Activated B cell treated with CpG ODN at 0.5 μM for 24 hours (primary cell): ENCODE measurements at regions of chr5 and their contacts with region 1.

Region 1: GRCh38 chr5:176361437-176362232 is at the start of gene KIAA1191:
- DNase-seq: peak; percentile 86
- ATAC-seq: peak; percentile 87
- H3K4me3 Mint-ChIP-seq: peak within 1 kb of the TSS; percentile 99
- H3K27ac Mint-ChIP-seq: peak within 1 kb of the TSS; percentile 98
- H3K4me1 Mint-ChIP-seq: peaks cover 28% of the 10 kb centered on the region
- H3K27me3 Mint-ChIP-seq: no peaks in the 10 kb centered on the region
- CTCF ChIP-seq: no peak
- total RNA-seq, gene KIAA1191: 56.6 and 57.5 TPM in 2 replicates

Region 2: DNA sequence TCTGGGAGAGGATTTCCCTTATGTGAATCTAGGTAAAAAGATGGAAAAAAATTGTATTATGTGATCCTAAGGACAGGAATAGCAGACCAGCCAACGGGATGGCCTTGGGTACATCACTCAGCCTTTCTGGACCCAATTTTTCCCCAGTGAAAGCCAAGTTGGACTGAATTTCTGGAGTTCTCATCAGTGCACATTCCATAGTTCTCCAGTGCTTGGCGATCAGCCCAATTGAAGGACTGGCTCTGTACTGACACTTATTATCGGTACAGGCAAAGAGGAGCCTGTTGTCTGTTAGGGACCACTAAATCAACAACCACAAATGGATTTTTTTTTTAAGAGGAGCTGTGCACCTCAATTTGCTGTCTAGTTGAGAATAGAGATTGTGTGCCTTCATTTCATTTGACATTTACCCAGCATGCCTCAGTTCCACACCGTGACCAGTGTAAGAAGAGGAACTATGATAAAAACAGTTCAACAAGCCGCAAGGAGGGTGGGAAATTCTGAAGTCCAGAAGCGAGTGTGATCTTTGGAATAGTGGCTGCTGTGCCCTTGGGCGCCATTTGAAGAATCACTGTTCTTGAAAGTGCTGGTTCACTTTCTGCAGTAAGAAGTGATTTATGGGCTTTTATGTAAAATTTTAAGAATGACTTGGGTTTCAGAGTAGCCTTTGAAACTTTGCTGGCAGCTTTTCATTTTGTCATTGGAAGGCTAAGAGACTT is 11.6 kb after region 1 on chr5:
- CTCF ChIA-PET with region 1: interaction called, 3 read pairs
- POLR2A ChIA-PET with region 1: interaction called, 7 read pairs
- intact Hi-C with region 1: loop called (anchors 1 kb)
- DNase-seq: no peak
- ATAC-seq: peak; percentile 91
- H3K4me3 Mint-ChIP-seq: no peak overlapping the region
- H3K27ac Mint-ChIP-seq: peak overlapping the region; percentile 21
- H3K4me1 Mint-ChIP-seq: peaks cover 9% of the 10 kb centered on the region
- H3K27me3 Mint-ChIP-seq: no peaks in the 10 kb centered on the region
- CTCF ChIP-seq: no peak

Region 3: DNA sequence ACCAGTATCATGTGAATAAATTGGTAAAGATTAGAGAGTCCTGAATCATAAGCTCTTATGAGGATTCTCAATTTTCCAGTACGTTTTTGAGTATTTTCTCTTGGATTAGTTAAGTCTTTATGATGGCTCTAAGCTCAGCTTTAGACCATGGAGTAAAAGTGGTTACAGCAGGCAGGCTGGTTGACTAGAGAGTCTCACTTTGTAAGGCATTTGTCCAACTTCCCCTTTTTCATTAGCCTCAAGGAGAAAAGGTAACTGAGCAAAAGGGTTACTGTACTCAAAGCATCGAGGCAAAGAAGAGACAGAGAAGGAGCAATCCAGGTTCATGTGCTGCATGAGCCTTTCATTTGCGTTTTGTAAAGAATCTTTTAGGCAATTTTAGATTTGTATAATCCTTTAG is 18.2 kb after region 1 on chr5:
- CTCF ChIA-PET with region 1: interaction called, 3 read pairs
- POLR2A ChIA-PET with region 1: interaction called, 6 read pairs
- intact Hi-C with region 1: loop called (anchors 2 kb)
- DNase-seq: no peak
- ATAC-seq: peak; percentile 79
- H3K4me3 Mint-ChIP-seq: no peak overlapping the region
- H3K27ac Mint-ChIP-seq: peak overlapping the region; percentile 10
- H3K4me1 Mint-ChIP-seq: peaks cover 10% of the 10 kb centered on the region
- H3K27me3 Mint-ChIP-seq: no peaks in the 10 kb centered on the region
- CTCF ChIP-seq: no peak